A549 (cell line): ENCODE measurements at regions of chr2 and their contacts with region 1.

Region 1: GRCh38 chr2:46062637-46063412 is 234.4 kb upstream of the EPAS1 start:
- DNase-seq: peak; percentile 76 to 86
- ATAC-seq: peak; percentile 58 to 74; a peak in 5 of 6 replicates
- H3K4me3 ChIP-seq: no peak overlapping the region
- H3K27ac ChIP-seq: peak overlapping the region; percentile 65 to 91
- H3K4me1 ChIP-seq: peaks cover 51% of the 10 kb centered on the region
- CTCF ChIP-seq: peak; percentile 95
- EP300 ChIP-seq: no peak
- POLR2A ChIP-seq: no peak
- RAD21 ChIP-seq: peak; percentile 96 to 97

Region 2: DNA sequence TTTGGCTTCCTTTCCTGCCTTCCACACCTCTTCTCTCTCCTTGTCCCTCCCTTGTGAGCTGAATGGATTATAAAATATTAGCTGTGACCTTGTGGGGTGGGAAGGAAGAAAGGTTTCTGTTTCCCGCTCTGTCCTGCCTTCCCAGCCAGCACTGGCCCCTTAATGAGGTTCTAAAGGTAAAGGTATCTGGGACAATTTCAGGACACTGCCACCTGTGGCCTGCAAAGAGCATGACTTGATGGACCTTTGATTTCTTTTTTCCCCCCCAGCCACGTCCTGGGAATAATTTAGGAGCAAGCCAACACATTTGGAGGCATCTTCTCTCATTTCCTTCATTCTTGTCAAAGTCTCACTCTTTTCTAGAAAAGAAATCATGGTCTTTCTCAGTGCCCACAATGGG is 12.3 kb before region 1 on chr2:
- CTCF ChIA-PET with region 1: interaction called, 25 read pairs
- POLR2A ChIA-PET with region 1: no interaction called
- DNase-seq: no peak
- ATAC-seq: peak in 1 of 2 experiments; percentile 46; a peak in 1 of 6 replicates
- H3K4me3 ChIP-seq: no peak overlapping the region
- H3K27ac ChIP-seq: no peak overlapping the region
- H3K4me1 ChIP-seq: no peaks in the 10 kb centered on the region
- CTCF ChIP-seq: no peak
- EP300 ChIP-seq: no peak
- POLR2A ChIP-seq: no peak
- RAD21 ChIP-seq: no peak

Region 3: DNA sequence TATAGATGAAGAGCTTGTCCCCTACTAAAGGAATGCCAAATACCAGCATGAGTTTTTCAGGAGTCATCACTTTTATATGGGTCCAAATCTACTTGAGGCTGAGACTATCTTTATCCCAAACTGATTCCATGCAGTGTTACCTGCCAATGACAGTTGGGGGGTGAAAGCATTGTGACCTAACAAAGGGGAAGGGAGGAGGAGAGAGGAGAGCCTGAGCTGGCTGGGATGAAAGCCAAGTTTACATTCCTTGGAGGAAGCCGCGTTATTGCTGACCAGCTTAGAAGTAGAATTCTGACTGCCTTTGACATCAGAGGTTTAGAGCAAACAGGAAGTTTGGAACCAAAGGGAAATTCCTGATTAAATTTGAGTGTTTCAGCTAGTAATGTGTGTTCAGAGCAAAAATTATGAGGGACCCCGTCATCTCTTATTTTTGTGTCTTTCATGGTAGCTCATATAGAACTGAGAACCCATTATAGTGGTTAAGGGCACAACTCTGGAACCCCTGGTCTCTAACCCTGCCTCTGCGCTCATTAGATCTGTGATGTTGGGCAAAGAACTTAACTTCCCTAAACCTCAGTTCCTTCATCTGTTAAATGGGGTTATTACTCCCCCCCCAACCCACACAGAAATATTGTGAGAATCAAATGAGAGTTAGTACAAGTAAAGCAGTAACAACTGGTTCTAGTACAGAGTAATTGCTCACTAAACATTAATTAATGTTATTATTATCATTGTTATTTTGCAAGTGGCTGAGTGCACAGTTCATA is 35.1 kb after region 1 on chr2:
- CTCF ChIA-PET with region 1: interaction called, 32 read pairs
- POLR2A ChIA-PET with region 1: interaction called, 6 read pairs
- DNase-seq: peak; percentile 76 to 94
- ATAC-seq: peak; percentile 90 to 92
- H3K4me3 ChIP-seq: no peak overlapping the region
- H3K27ac ChIP-seq: peak overlapping the region; percentile 82 to 88
- H3K4me1 ChIP-seq: peaks cover 31% of the 10 kb centered on the region
- CTCF ChIP-seq: no peak
- EP300 ChIP-seq: peak; percentile 92 to 93; a peak in 3 of 5 replicates
- POLR2A ChIP-seq: no peak
- RAD21 ChIP-seq: peak; percentile 32 to 61

Region 4: DNA sequence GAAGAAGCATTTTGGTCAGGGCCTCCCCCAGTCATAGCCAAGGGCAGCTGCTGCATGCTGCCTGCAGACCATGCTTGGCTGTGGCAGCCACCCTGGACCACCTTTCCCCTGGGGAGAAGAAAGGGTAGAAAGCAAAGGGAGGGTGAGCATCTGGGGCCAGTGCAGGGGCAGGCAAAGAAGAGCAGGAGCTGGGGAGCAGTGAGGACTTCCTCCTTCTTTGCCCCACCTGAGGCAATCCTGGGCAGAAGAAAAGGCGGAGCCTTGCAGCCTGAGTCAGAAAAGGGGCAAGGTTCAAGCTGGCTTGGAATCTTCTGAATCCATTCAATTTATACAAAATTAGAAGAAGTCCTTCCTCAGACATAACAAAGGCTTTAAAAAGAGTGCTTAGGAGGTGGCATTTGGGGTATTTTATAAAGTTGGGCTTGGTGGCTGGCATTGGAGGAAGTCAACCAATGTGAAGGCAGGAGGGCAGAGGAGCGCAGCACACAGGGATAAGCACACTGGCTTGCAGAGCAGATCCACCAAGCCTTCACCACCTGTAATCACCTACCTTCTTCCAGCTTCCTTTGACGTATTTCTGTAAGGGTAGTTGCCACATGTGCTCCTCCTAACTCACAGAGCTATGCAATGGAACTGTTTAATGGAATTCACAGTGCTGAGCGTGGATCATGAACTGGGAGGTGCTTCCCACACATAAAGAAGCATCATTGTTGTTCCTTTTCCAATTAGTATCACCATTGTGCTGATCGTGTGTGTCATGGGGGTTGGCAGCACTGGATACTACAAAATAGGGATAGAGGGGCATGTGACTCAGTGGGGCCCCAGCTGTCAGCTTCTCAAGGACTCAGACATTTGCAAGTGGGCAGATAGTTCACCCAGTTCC is 80.0 kb after region 1 on chr2:
- CTCF ChIA-PET with region 1: interaction called, 13 read pairs
- POLR2A ChIA-PET with region 1: no interaction called
- DNase-seq: peak in 1 of 2 experiments; percentile 31
- ATAC-seq: peak; percentile 65 to 83; a peak in 5 of 6 replicates
- H3K4me3 ChIP-seq: no peak overlapping the region
- H3K27ac ChIP-seq: peak overlapping the region; percentile 49 to 82
- H3K4me1 ChIP-seq: peaks cover 32% of the 10 kb centered on the region
- CTCF ChIP-seq: no peak
- EP300 ChIP-seq: no peak
- POLR2A ChIP-seq: no peak
- RAD21 ChIP-seq: no peak

Region 5: DNA sequence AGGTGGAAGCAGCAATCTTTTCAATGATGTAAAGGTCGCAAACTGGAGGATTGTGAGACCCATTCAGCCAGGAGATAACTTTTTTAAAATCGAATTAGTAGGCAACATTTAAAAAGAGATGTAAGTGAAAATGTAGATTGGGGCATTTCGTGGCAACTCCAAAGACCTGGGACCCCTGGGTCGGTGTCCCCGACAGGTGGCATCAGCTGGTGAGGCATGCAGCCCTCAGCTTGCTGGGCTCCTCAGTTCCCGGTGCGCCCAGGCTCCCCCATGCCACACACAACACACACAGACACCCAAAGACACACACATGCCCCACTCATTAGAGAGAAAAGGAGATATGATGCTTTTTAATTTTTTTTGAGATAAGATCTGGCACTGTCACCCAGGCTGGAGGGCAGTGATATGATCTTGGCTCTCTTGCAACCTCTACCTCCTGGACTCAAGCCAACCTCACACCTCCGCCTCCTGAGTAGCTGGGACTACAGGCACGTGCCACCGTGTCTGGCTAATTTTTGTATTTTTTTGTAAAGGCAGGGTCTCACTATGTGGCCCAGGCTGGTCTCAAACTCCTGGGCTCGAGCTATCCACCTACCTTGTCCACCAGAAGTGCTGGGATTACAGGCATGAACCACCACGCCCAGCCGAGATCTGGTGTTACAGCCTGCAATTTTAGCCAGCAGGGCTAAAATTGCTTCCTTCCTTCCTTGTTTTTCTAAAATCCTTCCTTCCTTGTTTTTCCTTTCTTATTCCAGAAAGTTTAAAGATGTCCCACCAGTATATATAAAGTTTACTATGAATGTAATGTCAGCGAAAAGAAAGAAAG is 111.7 kb after region 1 on chr2:
- CTCF ChIA-PET with region 1: interaction called, 10 read pairs
- POLR2A ChIA-PET with region 1: no interaction called
- DNase-seq: no peak
- ATAC-seq: no peak
- H3K4me3 ChIP-seq: no peak overlapping the region
- H3K27ac ChIP-seq: peak overlapping the region in 1 of 2 experiments; percentile 89; a peak in 3 of 6 replicates
- H3K4me1 ChIP-seq: peaks cover 58% of the 10 kb centered on the region
- CTCF ChIP-seq: no peak
- EP300 ChIP-seq: no peak
- POLR2A ChIP-seq: no peak
- RAD21 ChIP-seq: no peak

Region 6: DNA sequence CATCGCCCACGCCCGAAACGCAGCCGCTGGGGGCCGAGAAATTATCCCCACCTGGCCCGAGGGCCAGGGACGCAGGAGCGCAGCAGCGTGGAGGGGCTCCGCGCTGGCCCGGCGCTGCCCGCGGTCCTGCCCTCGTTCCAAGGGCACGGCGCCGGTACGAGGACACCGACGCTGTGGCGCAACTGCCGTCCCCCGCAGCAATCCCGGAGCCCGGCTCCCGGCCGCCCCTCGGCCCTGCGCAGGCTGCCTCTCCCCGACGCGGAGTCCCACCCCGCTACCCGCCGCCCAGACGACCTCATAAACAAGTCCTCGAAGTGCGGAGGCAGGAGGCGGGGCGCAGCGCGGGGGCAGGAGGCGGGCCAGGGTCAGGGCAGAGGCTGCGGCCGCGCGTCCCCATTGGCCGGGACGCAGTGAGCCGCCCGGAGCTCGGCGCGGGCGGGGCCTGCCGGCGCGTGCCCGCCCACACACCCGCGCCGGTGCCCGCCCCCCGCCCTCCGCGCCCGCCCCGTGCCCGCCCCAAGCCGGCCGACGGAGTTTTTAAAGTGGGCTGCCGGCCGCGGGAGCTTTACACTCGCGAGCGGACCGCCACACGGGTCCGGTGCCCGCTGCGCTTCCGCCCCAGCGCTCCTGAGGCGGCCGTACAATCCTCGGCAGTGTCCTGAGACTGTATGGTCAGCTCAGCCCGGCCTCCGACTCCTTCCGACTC is 234.2 kb after region 1 on chr2 and contains the start of gene EPAS1:
- CTCF ChIA-PET with region 1: interaction called, 28 read pairs
- POLR2A ChIA-PET with region 1: interaction called, 23 read pairs
- DNase-seq: peak; percentile 89 to 96
- ATAC-seq: peak; percentile 74 to 79
- H3K4me3 ChIP-seq: peak within 1 kb of the TSS; percentile 92
- H3K27ac ChIP-seq: peak within 1 kb of the TSS; percentile 81 to 91
- H3K4me1 ChIP-seq: peaks cover 41% of the 10 kb centered on the region
- CTCF ChIP-seq: no peak
- EP300 ChIP-seq: no peak
- POLR2A ChIP-seq: peak; percentile 94
- RAD21 ChIP-seq: no peak; a peak in 1 of 5 replicates
- polyA plus RNA-seq, gene EPAS1: 143 and 150 TPM in 2 replicates

Region 7: GRCh38 chr2:46364797-46365457 is 302.1 kb after region 1 on chr2:
- CTCF ChIA-PET with region 1: interaction called, 27 read pairs
- POLR2A ChIA-PET with region 1: no interaction called
- DNase-seq: peak; percentile 50 to 71
- ATAC-seq: peak in 1 of 2 experiments; percentile 70; a peak in 3 of 6 replicates
- H3K4me3 ChIP-seq: no peak overlapping the region
- H3K27ac ChIP-seq: peak overlapping the region in 1 of 2 experiments; percentile 60; a peak in 2 of 6 replicates
- H3K4me1 ChIP-seq: peaks cover 27% of the 10 kb centered on the region
- CTCF ChIP-seq: peak; percentile 94
- EP300 ChIP-seq: no peak
- POLR2A ChIP-seq: no peak
- RAD21 ChIP-seq: peak; percentile 94 to 96